GM13976 (cell line): ENCODE measurements at regions of chr9 and their contacts with region 1.

Region 1: GRCh38 chr9:76704593-76705204 is 59.5 kb upstream of the PCA3 start:
- DNase-seq: no peak
- CTCF ChIP-seq: peak; percentile 42

Region 2: GRCh38 chr9:76441551-76442322 is 263.0 kb before region 1 on chr9:
- in situ Hi-C with region 1: loop called (anchors 10 kb)
- DNase-seq: peak; percentile 47
- CTCF ChIP-seq: no peak

Region 3: GRCh38 chr9:76592091-76593010 is 112.3 kb before region 1 on chr9:
- in situ Hi-C with region 1: no loop called
- DNase-seq: no peak
- CTCF ChIP-seq: no peak